ENCODE measurements at regions of chr12 and their contacts with region 1.

Region 1: DNA sequence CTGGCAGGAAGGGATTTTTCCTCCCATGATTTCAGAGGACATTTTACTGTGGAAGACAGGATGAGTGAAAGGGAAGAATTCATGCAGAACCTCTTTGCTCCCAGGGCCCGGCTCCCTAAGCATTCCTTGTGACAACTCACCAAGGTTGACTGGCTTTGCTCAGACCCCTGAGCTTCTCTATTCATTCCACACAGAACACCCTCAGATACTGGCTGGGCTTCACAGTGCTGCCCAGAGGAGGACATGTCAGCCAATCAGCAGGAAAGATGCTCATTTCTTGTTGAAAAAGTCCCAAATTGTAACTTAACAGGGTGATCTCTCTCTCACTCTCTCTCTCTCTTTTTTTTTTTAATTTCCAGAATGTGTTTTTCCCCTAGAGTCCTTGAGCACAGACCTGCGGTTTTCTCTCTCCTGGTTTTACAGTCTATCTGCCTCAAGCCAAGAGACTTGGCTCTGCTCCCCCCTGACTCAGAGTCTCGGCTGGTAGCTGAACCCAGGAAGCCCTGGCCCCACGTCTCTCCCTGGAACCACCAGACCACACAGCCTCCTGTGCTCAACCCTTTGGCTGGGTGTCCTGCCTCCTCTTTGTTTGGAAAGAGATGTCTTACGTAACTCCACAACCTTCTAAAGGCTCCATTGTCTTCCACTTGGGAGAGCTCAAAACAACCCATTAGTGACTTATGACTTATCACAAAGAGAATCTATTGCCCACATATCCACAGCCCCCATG is 43.9 kb downstream of the SSPN start:
- DNase-seq: peak; percentile 100
- H3K4me3 ChIP-seq: no peak overlapping the region
- H3K27ac ChIP-seq: peak overlapping the region; percentile 87
- H3K4me1 ChIP-seq: peaks cover 32% of the 10 kb centered on the region
- H3K27me3 ChIP-seq: no peaks in the 10 kb centered on the region
- CTCF ChIP-seq: no peak

Region 2: DNA sequence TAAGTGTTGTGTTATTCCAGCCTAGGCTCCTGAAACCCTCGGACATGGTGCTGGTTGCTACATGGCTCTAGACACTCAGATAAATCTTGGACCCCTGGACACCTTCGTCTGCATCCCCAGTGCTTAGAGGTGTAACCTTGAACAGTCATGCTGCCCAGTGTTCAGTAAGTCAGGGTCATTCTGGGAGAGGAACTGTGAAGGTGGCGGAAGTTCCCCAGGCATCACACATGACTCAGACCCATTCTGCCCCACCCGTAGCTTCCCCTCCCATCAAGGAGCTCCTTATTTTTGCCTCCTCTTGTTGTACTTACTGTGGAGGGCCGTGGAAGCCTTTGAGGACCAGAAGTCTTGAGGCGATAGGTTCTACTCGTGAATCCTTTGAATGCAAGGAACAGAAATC is 62.0 kb before region 1 on chr12:
- CTCF ChIA-PET with region 1: no interaction called
- dilution Hi-C with region 1: no loop called
- in situ Hi-C with region 1: loop called in 1 of 2 experiments (anchors 10 kb)
- intact Hi-C with region 1: no loop called
- DNase-seq: peak; percentile 66
- H3K4me3 ChIP-seq: no peak overlapping the region
- H3K27ac ChIP-seq: no peak overlapping the region
- H3K4me1 ChIP-seq: no peaks in the 10 kb centered on the region
- H3K27me3 ChIP-seq: no peaks in the 10 kb centered on the region
- CTCF ChIP-seq: no peak

Region 3: GRCh38 chr12:26298785-26299621 is 59.7 kb after region 1 on chr12:
- CTCF ChIA-PET with region 1: no interaction called
- dilution Hi-C with region 1: no loop called
- in situ Hi-C with region 1: no loop called
- intact Hi-C with region 1: no loop called
- DNase-seq: peak; percentile 94
- H3K4me3 ChIP-seq: peak overlapping the region; percentile 13 to 35 (median 26)
- H3K27ac ChIP-seq: peak overlapping the region; percentile 92
- H3K4me1 ChIP-seq: peaks cover 30% of the 10 kb centered on the region
- H3K27me3 ChIP-seq: no peaks in the 10 kb centered on the region
- CTCF ChIP-seq: peak; percentile 47 to 52

Measured in mammary epithelial cell (primary cell).